Lower leg skin (tissue), 4 donors: ENCODE measurements at regions of chr12 and their contacts with region 1.

Region 1: DNA sequence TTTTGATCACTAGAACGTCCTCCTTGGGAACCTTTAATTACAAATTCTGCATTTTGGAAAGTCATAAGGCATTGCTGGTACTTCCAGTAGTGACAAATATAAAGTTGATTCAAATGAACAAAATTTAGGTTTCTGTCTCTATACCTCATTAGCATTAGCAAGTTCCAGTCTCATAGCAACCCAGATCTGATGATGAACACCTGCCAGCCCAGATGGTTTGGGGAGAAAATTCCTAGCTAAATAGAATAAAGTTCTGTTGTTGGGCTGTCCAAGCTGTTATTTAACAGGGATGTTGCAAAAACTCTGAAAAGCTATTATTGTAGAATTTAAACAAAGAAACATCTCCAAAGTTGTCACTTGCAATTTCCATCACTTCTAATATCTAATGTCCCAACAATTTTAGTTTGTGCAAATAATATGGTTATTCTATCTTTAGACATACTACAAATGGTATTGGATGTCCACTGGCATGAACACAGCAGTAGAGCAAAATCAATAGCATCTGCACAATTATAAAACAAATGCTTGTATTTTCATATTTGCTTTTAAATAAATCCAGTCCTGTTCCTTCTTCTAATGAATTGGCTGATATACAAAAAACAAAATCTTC is 299.4 kb downstream of the SLC16A7 start:
- DNase-seq: no peak
- H3K4me3 ChIP-seq: no peak overlapping the region
- CTCF ChIP-seq: no peak
- POLR2A ChIP-seq: no peak

Region 2: GRCh38 chr12:60172266-60172665 is 277.0 kb after region 1 on chr12:
- intact Hi-C with region 1: loop called (anchors 10 kb)
- DNase-seq: no peak
- H3K4me3 ChIP-seq: no peak overlapping the region
- CTCF ChIP-seq: no peak
- POLR2A ChIP-seq: no peak